Natural killer cell (primary cell): ENCODE measurements at regions of chr7 and their contacts with region 1.

Region 1: GRCh38 chr7:99143853-99144672 is at the start of gene SMURF1:
- DNase-seq: peak; percentile 83 to 90
- ATAC-seq: peak; percentile 55 to 90 (median 71)
- H3K4me3 ChIP-seq: peak within 1 kb of the TSS; percentile 57
- H3K4me3 Mint-ChIP-seq: peak within 1 kb of the TSS; percentile 96
- H3K27ac ChIP-seq: peak within 1 kb of the TSS; percentile 62
- H3K27ac Mint-ChIP-seq: peak within 1 kb of the TSS; percentile 94 to 95
- H3K4me1 ChIP-seq: peaks cover 22% of the 10 kb centered on the region
- H3K4me1 Mint-ChIP-seq: peaks cover 36 to 37% of the 10 kb centered on the region in 2 donors
- H3K27me3 ChIP-seq: peaks cover 2% of the 10 kb centered on the region
- H3K27me3 Mint-ChIP-seq: peaks cover 2 to 13% of the 10 kb centered on the region in 2 donors
- CTCF ChIP-seq: no peak
- total RNA-seq, gene SMURF1: 33.3 to 34.7 (median 34.2) TPM

Region 2: DNA sequence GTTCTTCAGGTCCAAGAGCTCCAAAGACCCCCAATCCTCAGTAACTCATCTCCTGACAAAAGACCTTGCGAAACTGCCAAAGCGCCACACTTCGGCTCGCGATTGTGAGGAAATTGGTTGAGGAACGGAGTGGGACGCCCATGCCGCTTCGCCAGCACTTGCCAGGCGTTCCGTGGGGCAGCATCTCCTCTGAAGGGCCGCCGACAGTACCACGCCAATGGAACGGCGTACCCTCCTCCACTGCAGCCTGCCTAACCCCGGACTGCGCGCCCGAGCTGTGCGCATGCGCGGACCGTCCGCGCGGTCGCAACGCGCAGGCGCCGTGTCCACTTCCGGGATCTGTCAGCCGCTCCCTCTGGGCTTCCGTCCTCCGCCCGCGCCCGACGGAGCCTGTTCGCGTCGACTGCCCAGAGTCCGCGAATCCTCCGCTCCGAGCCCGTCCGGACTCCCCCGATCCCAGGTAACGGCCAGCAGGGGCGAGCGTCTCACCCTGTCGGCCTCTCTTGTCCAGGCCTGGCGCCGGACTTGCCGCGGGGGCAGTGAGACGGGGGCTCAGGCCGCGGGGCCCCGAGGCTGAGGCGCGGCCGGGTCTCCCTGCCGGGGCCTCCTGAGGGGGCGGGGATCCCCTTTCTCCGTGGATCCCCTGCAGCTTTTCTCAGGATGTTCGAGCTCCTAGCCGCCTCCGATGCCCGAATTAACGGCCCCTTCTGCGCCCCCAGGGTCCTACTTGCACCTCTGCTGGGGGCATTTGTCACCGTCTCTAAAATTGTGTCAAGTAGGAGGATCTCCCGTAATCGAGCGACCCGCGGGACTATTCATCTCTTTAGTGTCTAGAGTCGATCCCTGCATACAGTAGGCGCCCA is 181.7 kb after region 1 on chr7 and contains the start of gene ARPC1A:
- intact Hi-C with region 1: loop called (anchors 5 kb)
- DNase-seq: peak; percentile 93 to 97
- ATAC-seq: peak; percentile 82 to 91 (median 90)
- H3K4me3 ChIP-seq: peak within 1 kb of the TSS; percentile 94
- H3K4me3 Mint-ChIP-seq: peak within 1 kb of the TSS; percentile 91
- H3K27ac ChIP-seq: peak within 1 kb of the TSS; percentile 75
- H3K27ac Mint-ChIP-seq: peak within 1 kb of the TSS; percentile 84 to 91
- H3K4me1 ChIP-seq: peaks cover 39% of the 10 kb centered on the region
- H3K4me1 Mint-ChIP-seq: peaks cover 38 to 50% of the 10 kb centered on the region in 2 donors
- H3K27me3 ChIP-seq: no peaks in the 10 kb centered on the region
- H3K27me3 Mint-ChIP-seq: no peaks in the 10 kb centered on the region
- CTCF ChIP-seq: no peak
- total RNA-seq, gene ARPC1A: 38.1 to 48.1 (median 47.9) TPM